ENCODE measurements at regions of chr18 and their contacts with region 1.

Region 1: GRCh38 chr18:77207540-77207939 is 42.1 kb upstream of the GALR1 start:
- DNase-seq: peak; percentile 74
- H3K4me3 Mint-ChIP-seq: no peak overlapping the region
- H3K27ac Mint-ChIP-seq: peak overlapping the region; percentile 71
- H3K4me1 Mint-ChIP-seq: peaks cover 32% of the 10 kb centered on the region
- H3K27me3 Mint-ChIP-seq: no peaks in the 10 kb centered on the region

Region 2: GRCh38 chr18:76982841-76983587 is 224.5 kb before region 1 on chr18:
- CTCF ChIA-PET with region 1: interaction called, 5 read pairs
- intact Hi-C with region 1: loop called (anchors 5 kb)
- DNase-seq: peak; percentile 96
- H3K4me3 Mint-ChIP-seq: no peak overlapping the region
- H3K27ac Mint-ChIP-seq: no peak overlapping the region
- H3K4me1 Mint-ChIP-seq: peaks cover 5% of the 10 kb centered on the region
- H3K27me3 Mint-ChIP-seq: no peaks in the 10 kb centered on the region

Region 3: DNA sequence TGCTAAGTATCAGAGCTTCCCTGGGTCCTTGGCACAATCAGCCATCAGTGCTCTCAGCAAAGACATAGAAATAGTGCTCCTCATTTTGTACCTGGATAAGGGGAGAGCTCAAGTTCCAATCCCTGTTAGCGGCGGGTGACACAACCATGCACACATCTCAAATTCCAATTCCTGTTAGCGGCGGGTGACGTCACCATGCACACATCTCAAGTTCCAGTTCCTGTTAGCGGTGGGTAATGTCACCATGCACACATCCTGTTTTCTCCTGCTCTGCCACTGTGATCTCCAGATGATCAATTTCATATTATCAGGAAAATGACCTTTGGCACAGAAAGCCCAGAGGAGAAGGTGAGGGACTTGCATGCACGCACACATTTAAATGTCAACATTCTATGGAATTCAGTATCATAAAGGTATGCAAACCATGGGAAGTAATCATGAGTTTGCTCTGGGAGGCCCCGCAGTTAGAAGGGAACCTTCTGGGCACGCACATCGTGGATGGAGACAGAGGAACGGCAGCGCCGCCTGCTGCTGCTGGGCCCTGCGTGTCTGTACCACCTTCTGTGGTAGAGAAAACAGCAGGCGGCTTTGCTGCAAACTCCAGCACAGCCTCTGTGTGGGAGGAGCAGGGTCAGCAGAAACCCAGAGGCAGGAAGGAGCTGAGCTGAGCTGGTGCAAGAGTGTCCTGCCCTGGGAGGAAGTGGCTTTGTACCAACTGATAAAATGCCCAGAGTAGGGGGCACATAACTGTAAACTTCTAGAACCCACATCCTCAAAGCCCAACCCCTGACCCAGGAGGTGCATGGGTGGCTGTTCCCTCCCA is 152.7 kb before region 1 on chr18:
- CTCF ChIA-PET with region 1: interaction called, 9 read pairs
- intact Hi-C with region 1: loop called (anchors 1 kb)
- DNase-seq: peak; percentile 93
- H3K4me3 Mint-ChIP-seq: peak overlapping the region; percentile 78
- H3K27ac Mint-ChIP-seq: peak overlapping the region; percentile 93
- H3K4me1 Mint-ChIP-seq: peaks cover 49% of the 10 kb centered on the region
- H3K27me3 Mint-ChIP-seq: no peaks in the 10 kb centered on the region

Region 4: DNA sequence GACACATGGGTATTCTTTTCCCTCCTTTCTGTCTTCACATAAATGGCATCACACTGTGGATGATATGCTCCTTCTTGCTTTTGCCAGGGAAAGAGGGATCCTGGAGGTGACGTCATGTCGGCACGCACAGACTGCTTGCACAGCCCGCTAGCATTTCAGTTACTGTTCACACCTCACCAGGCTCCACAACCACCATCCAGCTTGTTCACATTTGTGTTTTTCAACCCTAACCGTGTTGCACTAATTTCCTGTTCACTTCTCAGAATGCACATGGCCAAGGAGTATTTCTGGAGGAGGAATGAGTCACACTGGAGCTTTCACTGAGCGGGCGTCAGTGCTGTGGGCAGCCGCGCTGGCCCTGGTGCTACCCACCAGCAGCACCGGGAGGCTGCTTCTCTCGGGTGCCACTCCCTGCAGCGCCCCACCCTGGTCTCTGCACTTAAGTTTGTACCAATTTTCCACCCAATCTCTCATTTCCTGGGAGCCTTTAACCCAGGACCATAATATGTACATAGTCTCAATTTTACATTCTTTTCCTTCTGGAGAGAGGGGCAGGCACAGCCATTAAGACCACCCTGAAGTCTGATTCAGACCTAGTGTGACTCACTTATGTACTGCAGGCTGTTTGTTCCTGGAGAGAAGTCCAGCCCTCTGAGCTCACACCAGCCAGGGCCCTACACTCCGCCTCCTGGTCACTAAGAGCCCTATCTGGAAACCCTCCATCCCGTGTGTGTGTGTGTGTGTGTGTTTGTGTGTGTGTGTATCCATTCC is 140.1 kb before region 1 on chr18:
- CTCF ChIA-PET with region 1: interaction called, 7 read pairs
- intact Hi-C with region 1: loop called (anchors 1 kb)
- DNase-seq: peak; percentile 77
- H3K4me3 Mint-ChIP-seq: peak overlapping the region; percentile 17
- H3K27ac Mint-ChIP-seq: peak overlapping the region; percentile 92
- H3K4me1 Mint-ChIP-seq: peaks cover 99% of the 10 kb centered on the region
- H3K27me3 Mint-ChIP-seq: no peaks in the 10 kb centered on the region

Region 5: GRCh38 chr18:77140439-77141109 is 67.0 kb before region 1 on chr18:
- CTCF ChIA-PET with region 1: interaction called, 6 read pairs
- intact Hi-C with region 1: loop called (anchors 2 kb)
- DNase-seq: peak; percentile 84
- H3K4me3 Mint-ChIP-seq: no peak overlapping the region
- H3K27ac Mint-ChIP-seq: peak overlapping the region; percentile 75
- H3K4me1 Mint-ChIP-seq: peaks cover 27% of the 10 kb centered on the region
- H3K27me3 Mint-ChIP-seq: no peaks in the 10 kb centered on the region